ENCODE measurements at regions of chrX and their contacts with region 1.

Region 1: DNA sequence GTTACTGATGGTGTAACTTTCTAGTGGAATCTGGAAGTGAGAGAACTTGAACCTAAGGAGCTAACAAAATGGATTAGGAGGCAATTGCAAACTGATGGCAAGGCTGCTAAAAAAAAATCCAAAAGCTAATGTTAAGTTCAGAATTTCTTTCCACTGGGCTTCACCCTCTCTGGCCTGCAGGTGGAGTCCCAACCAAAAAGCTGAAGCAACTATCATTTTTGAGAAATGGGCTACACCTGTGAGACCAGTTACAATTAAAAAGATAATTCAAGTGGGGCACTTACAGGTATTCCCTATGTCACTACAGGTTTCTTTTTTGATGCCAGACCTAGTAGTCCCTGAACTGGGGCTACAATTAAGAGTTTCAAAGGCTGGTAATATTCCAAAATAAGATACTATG is 142.1 kb upstream of the FTHL17 start:
- DNase-seq: peak; percentile 38
- CTCF ChIP-seq: peak; percentile 46

Region 2: GRCh38 chrX:30635630-30636029 is 578.3 kb before region 1 on chrX:
- CTCF ChIA-PET with region 1: no interaction called
- POLR2A ChIA-PET with region 1: no interaction called
- DNase-seq: peak; percentile 29
- CTCF ChIP-seq: no peak

Region 3: GRCh38 chrX:31201503-31201902 is 12.4 kb before region 1 on chrX:
- CTCF ChIA-PET with region 1: interaction called, 31 read pairs
- POLR2A ChIA-PET with region 1: no interaction called
- DNase-seq: no peak
- CTCF ChIP-seq: no peak

Region 4: GRCh38 chrX:31293409-31293808 is 79.5 kb after region 1 on chrX:
- CTCF ChIA-PET with region 1: interaction called, 40 read pairs
- POLR2A ChIA-PET with region 1: no interaction called
- DNase-seq: peak; percentile 12
- CTCF ChIP-seq: peak; percentile 37

Region 5: DNA sequence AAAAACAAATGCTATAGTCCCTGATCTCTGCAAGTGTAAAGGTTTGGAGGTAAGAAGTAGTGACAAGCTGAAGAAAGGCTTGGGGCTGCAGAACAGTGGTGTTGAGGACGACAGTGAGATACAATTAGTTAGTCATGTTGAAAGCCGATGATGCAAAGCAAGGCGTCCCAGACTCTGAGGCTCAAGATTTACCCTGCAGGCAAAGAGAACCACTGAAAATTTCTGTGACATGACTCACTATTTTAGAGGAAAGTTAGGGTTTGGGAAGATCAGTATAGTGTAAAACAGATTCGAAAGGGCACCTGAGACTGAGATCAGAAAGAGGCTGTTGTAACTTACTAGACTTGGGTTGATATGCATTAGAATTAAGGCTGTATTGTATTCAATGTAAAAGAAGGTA is 139.2 kb after region 1 on chrX:
- CTCF ChIA-PET with region 1: no interaction called
- POLR2A ChIA-PET with region 1: no interaction called
- DNase-seq: no peak
- CTCF ChIP-seq: no peak

Region 6: GRCh38 chrX:31366041-31366440 is 152.1 kb after region 1 on chrX:
- CTCF ChIA-PET with region 1: no interaction called
- POLR2A ChIA-PET with region 1: no interaction called
- DNase-seq: no peak
- CTCF ChIP-seq: no peak